B cell (primary cell): ENCODE measurements at regions of chr6 and their contacts with region 1.

Region 1: GRCh38 chr6:43506667-43507471 is 3.3 kb downstream of the LRRC73 start:
- DNase-seq: peak; percentile 90
- ATAC-seq: peak; percentile 57
- H3K4me3 ChIP-seq: no peak overlapping the region
- H3K4me3 Mint-ChIP-seq: no peak overlapping the region
- H3K27ac ChIP-seq: no peak overlapping the region
- H3K27ac Mint-ChIP-seq: no peak overlapping the region
- H3K4me1 ChIP-seq: peaks cover 21 to 26% of the 10 kb centered on the region in 2 donors
- H3K4me1 Mint-ChIP-seq: peaks cover 27% of the 10 kb centered on the region
- H3K27me3 ChIP-seq: peaks cover 0 to 20% (median 8%) of the 10 kb centered on the region in 4 experiments
- H3K27me3 Mint-ChIP-seq: peaks cover 10% of the 10 kb centered on the region
- CTCF ChIP-seq: peak; percentile 92

Region 2: DNA sequence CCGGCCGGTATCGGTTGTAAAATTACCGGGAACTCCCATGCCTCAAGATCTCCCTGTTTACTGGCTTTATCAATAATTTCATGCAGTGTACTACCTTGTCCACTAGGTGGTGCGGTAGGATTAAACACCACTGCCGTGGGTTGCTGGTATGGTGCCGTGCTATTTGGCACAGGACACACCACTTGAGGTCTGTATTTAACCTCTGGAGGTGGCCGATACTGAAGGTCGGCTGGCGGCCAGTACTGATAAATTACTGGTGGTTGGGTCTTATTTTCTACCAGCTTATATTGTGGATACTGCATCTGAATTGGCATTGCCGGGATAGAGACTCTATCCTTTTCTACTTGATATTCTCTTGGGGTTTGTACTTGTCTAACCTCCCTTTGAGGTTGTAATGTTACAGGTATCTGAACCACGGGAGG is 605.3 kb before region 1 on chr6:
- CTCF ChIA-PET with region 1: no interaction called
- POLR2A ChIA-PET with region 1: no interaction called
- intact Hi-C with region 1: loop called (anchors 5 kb)
- DNase-seq: peak; percentile 88
- ATAC-seq: peak; percentile 99
- H3K4me3 ChIP-seq: no peak overlapping the region
- H3K4me3 Mint-ChIP-seq: no peak overlapping the region
- H3K27ac ChIP-seq: no peak overlapping the region
- H3K27ac Mint-ChIP-seq: no peak overlapping the region
- H3K4me1 ChIP-seq: peaks cover 5 to 8% of the 10 kb centered on the region in 2 donors
- H3K4me1 Mint-ChIP-seq: peaks cover 10% of the 10 kb centered on the region
- H3K27me3 ChIP-seq: no peaks in the 10 kb centered on the region
- H3K27me3 Mint-ChIP-seq: no peaks in the 10 kb centered on the region
- CTCF ChIP-seq: peak; percentile 93

Region 3: DNA sequence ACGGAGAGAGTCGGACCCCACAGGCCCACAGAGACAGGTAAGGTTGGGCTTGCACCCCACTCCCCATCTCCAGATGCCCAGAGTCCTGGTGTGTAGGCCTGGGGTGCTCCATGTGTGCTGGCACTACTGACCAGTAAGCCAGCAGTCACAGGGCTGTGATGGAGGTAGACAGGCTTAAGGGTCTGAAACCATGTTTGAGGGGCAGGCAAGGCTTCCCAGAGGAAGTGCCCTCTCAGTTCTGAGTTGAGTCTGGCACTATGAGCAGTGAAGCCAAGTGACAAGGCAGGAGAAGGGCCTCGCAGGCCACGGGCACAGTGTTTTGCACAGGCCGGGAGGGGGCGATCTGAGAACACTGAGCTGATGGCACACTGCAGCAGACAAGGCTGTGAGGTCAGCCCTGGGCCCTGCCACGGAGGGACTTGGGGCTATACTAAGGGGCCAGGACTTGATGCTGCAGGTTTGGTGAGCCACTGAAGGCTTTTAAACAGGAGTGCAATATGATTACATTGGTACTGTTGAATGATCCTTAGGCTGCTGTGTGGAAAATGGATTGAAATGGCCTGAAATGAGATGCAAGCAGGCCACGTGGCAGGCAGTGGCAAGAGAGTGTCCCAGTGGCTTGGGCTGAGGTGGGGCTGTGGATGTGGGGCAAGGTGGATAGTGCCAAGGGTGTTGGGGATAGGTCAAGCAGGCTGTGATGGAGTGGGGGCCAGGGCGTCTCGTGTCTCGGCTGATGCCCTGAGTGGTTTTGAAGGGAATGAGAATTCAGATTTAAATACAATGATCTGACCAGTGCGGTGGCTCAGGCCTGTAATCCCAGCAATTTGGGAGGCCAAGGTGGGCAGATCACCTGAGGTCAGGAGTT is 243.3 kb before region 1 on chr6:
- CTCF ChIA-PET with region 1: interaction called, 50 read pairs
- POLR2A ChIA-PET with region 1: no interaction called
- intact Hi-C with region 1: loop called (anchors 1 kb)
- DNase-seq: peak; percentile 84
- ATAC-seq: peak; percentile 98
- H3K4me3 ChIP-seq: no peak overlapping the region
- H3K4me3 Mint-ChIP-seq: no peak overlapping the region
- H3K27ac ChIP-seq: no peak overlapping the region
- H3K27ac Mint-ChIP-seq: no peak overlapping the region
- H3K4me1 ChIP-seq: no peaks in the 10 kb centered on the region
- H3K4me1 Mint-ChIP-seq: peaks cover 8% of the 10 kb centered on the region
- H3K27me3 ChIP-seq: peaks cover 0 to under 1% (median 0%) of the 10 kb centered on the region in 4 experiments
- H3K27me3 Mint-ChIP-seq: peaks cover 4% of the 10 kb centered on the region
- CTCF ChIP-seq: peak; percentile 84

Region 4: GRCh38 chr6:43383021-43383667 is 123.7 kb before region 1 on chr6:
- CTCF ChIA-PET with region 1: interaction called, 4 read pairs
- POLR2A ChIA-PET with region 1: interaction called, 4 read pairs
- intact Hi-C with region 1: loop called (anchors 5 kb)
- DNase-seq: no peak
- ATAC-seq: no peak
- H3K4me3 ChIP-seq: peak overlapping the region in 2 of 5 experiments; percentile 18 to 42
- H3K4me3 Mint-ChIP-seq: peak overlapping the region; percentile 85
- H3K27ac ChIP-seq: peak overlapping the region; percentile 91 to 94
- H3K27ac Mint-ChIP-seq: peak overlapping the region; percentile 98
- H3K4me1 ChIP-seq: peaks cover 68 to 73% of the 10 kb centered on the region in 2 donors
- H3K4me1 Mint-ChIP-seq: peaks cover 67% of the 10 kb centered on the region
- H3K27me3 ChIP-seq: peaks cover 0 to 4% (median 2%) of the 10 kb centered on the region in 4 experiments
- H3K27me3 Mint-ChIP-seq: peaks cover 12% of the 10 kb centered on the region
- CTCF ChIP-seq: no peak

Region 5: DNA sequence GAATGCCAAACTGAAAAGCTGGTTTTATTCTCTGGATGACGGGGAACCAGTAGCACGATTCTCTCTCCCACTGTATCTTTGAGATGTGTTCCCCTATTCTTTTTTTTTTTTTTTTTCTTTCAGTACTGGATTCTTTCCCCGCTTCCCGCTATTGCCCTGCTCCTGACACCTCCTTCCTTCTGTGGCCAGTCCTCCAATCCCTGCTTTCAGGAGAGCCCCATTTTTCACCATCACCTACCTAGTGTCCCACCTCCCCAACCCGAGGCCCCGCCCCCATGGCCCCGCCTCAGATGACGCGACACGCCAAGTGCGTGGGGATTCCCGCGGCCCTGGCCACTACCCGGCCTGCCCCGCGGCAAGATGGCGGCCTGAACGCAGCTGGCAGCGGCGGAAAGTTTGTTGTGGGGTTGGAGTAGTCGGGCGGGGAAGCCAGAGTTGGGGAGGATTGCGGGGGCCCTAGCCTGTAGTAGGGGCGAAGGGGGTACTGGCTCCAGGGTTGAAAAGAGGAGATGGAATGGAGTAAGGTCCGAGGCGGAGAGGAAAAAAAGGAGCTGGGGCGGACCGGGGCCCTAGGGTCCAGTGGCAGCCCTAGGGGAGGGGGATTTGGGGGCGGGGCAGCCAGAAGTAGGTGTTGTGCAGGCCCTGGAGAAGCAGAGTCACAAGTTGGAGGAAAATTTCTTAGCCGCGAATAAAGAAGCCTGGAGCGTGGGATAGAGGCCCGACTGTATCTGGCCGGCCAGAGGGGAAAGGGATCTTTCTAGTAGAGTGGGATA is 29.4 kb before region 1 on chr6 and contains the start of gene TJAP1:
- CTCF ChIA-PET with region 1: interaction called, 7 read pairs
- POLR2A ChIA-PET with region 1: interaction called, 6 read pairs
- intact Hi-C with region 1: loop called (anchors 1 kb)
- DNase-seq: peak; percentile 94
- ATAC-seq: peak; percentile 100
- H3K4me3 ChIP-seq: peak within 1 kb of the TSS; percentile 51 to 81 (median 71)
- H3K4me3 Mint-ChIP-seq: peak within 1 kb of the TSS; percentile 96
- H3K27ac ChIP-seq: peak within 1 kb of the TSS; percentile 79 to 97
- H3K27ac Mint-ChIP-seq: peak within 1 kb of the TSS; percentile 98
- H3K4me1 ChIP-seq: peaks cover 14 to 22% of the 10 kb centered on the region in 2 donors
- H3K4me1 Mint-ChIP-seq: peaks cover 41% of the 10 kb centered on the region
- H3K27me3 ChIP-seq: no peaks in the 10 kb centered on the region
- H3K27me3 Mint-ChIP-seq: no peaks in the 10 kb centered on the region
- CTCF ChIP-seq: no peak
- total RNA-seq, gene TJAP1: 57.1 and 59.1 TPM in 2 replicates

Region 6: DNA sequence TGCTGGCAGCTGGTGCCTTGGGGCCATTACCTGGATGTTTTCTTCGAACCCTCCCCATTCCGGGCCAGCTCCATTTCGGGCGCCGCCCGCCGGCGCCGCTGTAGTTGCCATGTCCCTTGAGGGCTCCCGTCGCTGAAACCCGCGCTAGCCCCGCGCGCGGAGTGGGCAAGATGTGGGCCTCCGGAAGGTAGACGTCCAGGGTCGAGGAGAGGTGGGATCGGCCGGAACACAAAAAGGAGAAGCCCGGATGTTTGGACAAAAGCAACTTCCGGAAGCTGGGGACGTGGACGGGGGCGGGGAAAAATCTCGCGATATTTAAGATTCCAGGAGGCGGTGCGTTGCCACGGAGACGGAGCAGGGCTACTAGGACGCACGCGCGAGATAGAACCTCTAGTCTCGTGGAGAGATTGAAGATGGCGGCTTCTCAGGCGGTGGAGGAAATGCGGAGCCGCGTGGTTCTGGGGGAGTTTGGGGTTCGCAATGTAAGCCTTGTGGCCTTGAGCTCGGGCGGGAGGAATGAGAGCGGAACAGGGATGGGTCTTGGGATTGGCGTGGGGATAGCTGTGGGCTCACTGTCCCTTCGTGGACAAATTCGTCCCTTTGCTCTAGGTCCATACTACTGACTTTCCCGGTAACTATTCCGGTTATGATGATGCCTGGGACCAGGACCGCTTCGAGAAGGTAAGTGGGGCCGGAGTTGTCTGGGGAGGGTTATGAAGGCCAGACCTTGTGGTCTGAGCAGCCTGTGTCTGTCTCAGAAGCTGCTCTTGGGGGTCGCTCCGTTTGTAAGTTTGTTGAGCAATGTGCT is 10.0 kb after region 1 on chr6 and contains the starts of genes POLR1C and YIPF3:
- CTCF ChIA-PET with region 1: interaction called, 32 read pairs
- POLR2A ChIA-PET with region 1: no interaction called
- intact Hi-C with region 1: no loop called
- DNase-seq: peak; percentile 97
- ATAC-seq: peak; percentile 96
- H3K4me3 ChIP-seq: peak within 1 kb of the TSS; percentile 78 to 98 (median 91)
- H3K4me3 Mint-ChIP-seq: no peak within 1 kb of the TSS
- H3K27ac ChIP-seq: peak within 1 kb of the TSS; percentile 65 to 91
- H3K27ac Mint-ChIP-seq: no peak within 1 kb of the TSS
- H3K4me1 ChIP-seq: peaks cover 28 to 36% of the 10 kb centered on the region in 2 donors
- H3K4me1 Mint-ChIP-seq: peaks cover 27% of the 10 kb centered on the region
- H3K27me3 ChIP-seq: no peaks in the 10 kb centered on the region
- H3K27me3 Mint-ChIP-seq: no peaks in the 10 kb centered on the region
- CTCF ChIP-seq: no peak
- total RNA-seq, gene POLR1C: 42.0 and 43.3 TPM in 2 replicates
- total RNA-seq, gene YIPF3: 82.1 and 92.6 TPM in 2 replicates

Region 7: GRCh38 chr6:43758617-43759050 is 251.8 kb after region 1 on chr6:
- CTCF ChIA-PET with region 1: no interaction called
- POLR2A ChIA-PET with region 1: no interaction called
- intact Hi-C with region 1: no loop called
- DNase-seq: peak; percentile 34
- ATAC-seq: peak; percentile 66
- H3K4me3 ChIP-seq: no peak overlapping the region
- H3K4me3 Mint-ChIP-seq: no peak overlapping the region
- H3K27ac ChIP-seq: no peak overlapping the region
- H3K27ac Mint-ChIP-seq: no peak overlapping the region
- H3K4me1 ChIP-seq: no peaks in the 10 kb centered on the region
- H3K4me1 Mint-ChIP-seq: peaks cover 3% of the 10 kb centered on the region
- H3K27me3 ChIP-seq: peaks cover 0 to 3% (median 0%) of the 10 kb centered on the region in 4 experiments
- H3K27me3 Mint-ChIP-seq: peaks cover 18% of the 10 kb centered on the region
- CTCF ChIP-seq: peak; percentile 66

Region 8: DNA sequence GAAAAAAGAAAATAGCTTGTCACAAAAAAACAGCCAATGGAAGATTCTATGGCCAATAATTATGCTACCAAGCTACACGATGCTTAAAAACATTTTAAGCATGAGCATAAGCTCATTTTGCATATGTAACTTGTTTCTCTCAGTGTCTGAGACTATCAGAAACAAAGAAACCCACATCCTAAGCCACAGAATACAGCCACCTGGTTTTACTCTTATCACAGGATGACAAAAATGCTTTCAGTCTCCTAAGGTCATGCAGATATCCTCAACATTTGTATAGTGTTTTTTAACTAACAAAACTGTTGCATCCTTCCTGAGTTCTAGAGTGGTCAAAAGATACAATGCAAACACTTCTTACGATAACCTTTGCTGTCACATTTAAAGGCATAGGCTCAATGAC is 1649.2 kb after region 1 on chr6:
- CTCF ChIA-PET with region 1: no interaction called
- POLR2A ChIA-PET with region 1: no interaction called
- intact Hi-C with region 1: no loop called
- DNase-seq: no peak
- ATAC-seq: no peak
- H3K4me3 ChIP-seq: no peak overlapping the region
- H3K4me3 Mint-ChIP-seq: no peak overlapping the region
- H3K27ac ChIP-seq: no peak overlapping the region
- H3K27ac Mint-ChIP-seq: no peak overlapping the region
- H3K4me1 ChIP-seq: no peaks in the 10 kb centered on the region
- H3K4me1 Mint-ChIP-seq: no peaks in the 10 kb centered on the region
- H3K27me3 ChIP-seq: no peaks in the 10 kb centered on the region
- H3K27me3 Mint-ChIP-seq: no peaks in the 10 kb centered on the region
- CTCF ChIP-seq: no peak